ENCODE measurements at regions of chr1 and their contacts with region 1.

Region 1: GRCh38 chr1:84763912-84764663 is 73.8 kb upstream of the SSX2IP start:
- DNase-seq: no peak
- H3K4me3 ChIP-seq: no peak overlapping the region
- H3K27ac ChIP-seq: no peak overlapping the region
- H3K4me1 ChIP-seq: peaks cover 0 to 4% (median 0%) of the 10 kb centered on the region in 4 donors
- H3K27me3 ChIP-seq: peaks cover 0 to 6% of the 10 kb centered on the region in 2 donors
- CTCF ChIP-seq: no peak

Region 2: GRCh38 chr1:84450910-84451309 is 313.2 kb before region 1 on chr1:
- intact Hi-C with region 1: loop called (anchors 10 kb)
- DNase-seq: no peak
- H3K4me3 ChIP-seq: no peak overlapping the region
- H3K27ac ChIP-seq: no peak overlapping the region
- H3K4me1 ChIP-seq: no peaks in the 10 kb centered on the region
- H3K27me3 ChIP-seq: no peaks in the 10 kb centered on the region
- CTCF ChIP-seq: no peak

Region 3: DNA sequence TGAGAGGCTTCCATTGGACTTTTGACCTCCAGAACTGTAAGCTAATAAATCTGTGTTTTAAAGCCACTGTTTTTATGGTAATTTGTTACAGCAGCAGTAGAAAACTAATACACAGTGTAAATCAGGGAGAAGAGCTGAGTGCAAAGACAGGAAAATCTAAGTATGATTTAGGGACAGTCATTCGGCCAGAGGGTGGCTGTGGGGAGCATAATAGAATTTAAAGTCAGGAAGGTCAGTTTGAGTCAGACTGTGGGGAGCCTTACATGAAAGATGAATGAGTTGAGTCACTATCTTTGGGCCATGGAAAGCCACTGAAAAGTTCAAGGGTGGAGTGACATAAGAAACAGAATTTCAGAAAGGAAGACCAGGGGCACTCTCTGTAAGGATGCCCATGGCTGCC is 21.4 kb before region 1 on chr1:
- intact Hi-C with region 1: no loop called
- DNase-seq: no peak
- H3K4me3 ChIP-seq: no peak overlapping the region
- H3K27ac ChIP-seq: no peak overlapping the region
- H3K4me1 ChIP-seq: no peaks in the 10 kb centered on the region
- H3K27me3 ChIP-seq: no peaks in the 10 kb centered on the region
- CTCF ChIP-seq: no peak

Measured in tibial artery (tissue), 4 donors.